CD4-positive, alpha-beta memory T cell (primary cell): ENCODE measurements at regions of chr18 and their contacts with region 1.

Region 1: DNA sequence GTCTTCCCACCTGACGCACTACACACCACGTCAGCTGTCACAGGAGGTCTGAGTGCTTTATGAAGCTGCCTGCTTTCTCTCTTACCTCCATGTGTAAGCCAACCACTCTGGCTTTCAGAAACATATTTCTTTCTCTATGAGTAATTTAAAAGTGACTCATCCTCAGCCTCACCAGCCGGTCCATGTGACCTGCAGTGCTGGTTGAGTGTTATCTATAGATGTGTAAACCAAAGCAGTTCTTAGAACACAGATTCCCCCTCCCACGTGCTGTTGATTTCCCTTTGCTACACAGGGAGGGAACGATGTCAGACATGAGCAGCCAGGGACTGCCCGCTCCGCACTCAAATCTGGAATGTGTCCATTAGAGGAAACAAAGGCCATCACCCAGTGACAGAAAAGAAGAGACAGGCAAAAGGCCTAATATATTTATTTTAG is 157.8 kb downstream of the BCL2 start:
- DNase-seq: peak; percentile 79 to 97 (median 86)
- H3K4me3 ChIP-seq: peak overlapping the region; percentile 37 to 38
- H3K4me3 Mint-ChIP-seq: peak overlapping the region; percentile 68 to 93 (median 90)
- H3K27ac ChIP-seq: peak overlapping the region; percentile 97
- H3K27ac Mint-ChIP-seq: peak overlapping the region; percentile 93 to 100 (median 99)
- H3K4me1 ChIP-seq: peaks cover 90% of the 10 kb centered on the region
- H3K4me1 Mint-ChIP-seq: peaks cover 77 to 96% (median 85%) of the 10 kb centered on the region in 4 donors
- H3K27me3 ChIP-seq: no peaks in the 10 kb centered on the region
- H3K27me3 Mint-ChIP-seq: no peaks in the 10 kb centered on the region

Region 2: GRCh38 chr18:63119647-63120046 is 42.1 kb before region 1 on chr18:
- CTCF ChIA-PET with region 1: no interaction called
- POLR2A ChIA-PET with region 1: no interaction called
- intact Hi-C with region 1: no loop called
- DNase-seq: no peak
- H3K4me3 ChIP-seq: no peak overlapping the region
- H3K4me3 Mint-ChIP-seq: no peak overlapping the region
- H3K27ac ChIP-seq: no peak overlapping the region
- H3K27ac Mint-ChIP-seq: peak overlapping the region in 1 of 7 donors; percentile 82
- H3K4me1 ChIP-seq: no peaks in the 10 kb centered on the region
- H3K4me1 Mint-ChIP-seq: peaks cover 3 to 9% (median 4%) of the 10 kb centered on the region in 4 donors
- H3K27me3 ChIP-seq: no peaks in the 10 kb centered on the region
- H3K27me3 Mint-ChIP-seq: peaks cover 0 to 3% of the 10 kb centered on the region in 2 donors

Region 3: GRCh38 chr18:63175264-63175663 is 13.5 kb after region 1 on chr18:
- CTCF ChIA-PET with region 1: interaction called, 20 read pairs
- POLR2A ChIA-PET with region 1: interaction called, 42 read pairs
- intact Hi-C with region 1: no loop called
- DNase-seq: no peak
- H3K4me3 ChIP-seq: no peak overlapping the region
- H3K4me3 Mint-ChIP-seq: peak overlapping the region in 1 of 8 donors; percentile 12
- H3K27ac ChIP-seq: no peak overlapping the region
- H3K27ac Mint-ChIP-seq: peak overlapping the region; percentile 32 to 66 (median 52)
- H3K4me1 ChIP-seq: peaks cover 33% of the 10 kb centered on the region
- H3K4me1 Mint-ChIP-seq: peaks cover 43 to 68% (median 53%) of the 10 kb centered on the region in 4 donors
- H3K27me3 ChIP-seq: no peaks in the 10 kb centered on the region
- H3K27me3 Mint-ChIP-seq: no peaks in the 10 kb centered on the region

Region 4: GRCh38 chr18:63199743-63200241 is 38.0 kb after region 1 on chr18:
- CTCF ChIA-PET with region 1: interaction called, 17 read pairs
- POLR2A ChIA-PET with region 1: interaction called, 40 read pairs
- intact Hi-C with region 1: loop called (anchors 1 kb)
- DNase-seq: peak; percentile 66 to 76 (median 71)
- H3K4me3 ChIP-seq: peak overlapping the region; percentile 64 to 65
- H3K4me3 Mint-ChIP-seq: no peak overlapping the region
- H3K27ac ChIP-seq: peak overlapping the region; percentile 59
- H3K27ac Mint-ChIP-seq: no peak overlapping the region
- H3K4me1 ChIP-seq: peaks cover 85% of the 10 kb centered on the region
- H3K4me1 Mint-ChIP-seq: peaks cover 28 to 37% (median 31%) of the 10 kb centered on the region in 4 donors
- H3K27me3 ChIP-seq: no peaks in the 10 kb centered on the region
- H3K27me3 Mint-ChIP-seq: no peaks in the 10 kb centered on the region

Region 5: GRCh38 chr18:63216516-63217311 is 54.9 kb after region 1 on chr18:
- CTCF ChIA-PET with region 1: interaction called, 16 read pairs
- POLR2A ChIA-PET with region 1: interaction called, 21 read pairs
- intact Hi-C with region 1: no loop called
- DNase-seq: peak; percentile 38 to 60 (median 50)
- H3K4me3 ChIP-seq: peak overlapping the region in 1 of 2 donors; percentile 21
- H3K4me3 Mint-ChIP-seq: peak overlapping the region; percentile 67 to 84 (median 78)
- H3K27ac ChIP-seq: peak overlapping the region; percentile 55
- H3K27ac Mint-ChIP-seq: peak overlapping the region; percentile 87 to 97 (median 91)
- H3K4me1 ChIP-seq: peaks cover 88% of the 10 kb centered on the region
- H3K4me1 Mint-ChIP-seq: peaks cover 71 to 100% (median 89%) of the 10 kb centered on the region in 4 donors
- H3K27me3 ChIP-seq: no peaks in the 10 kb centered on the region
- H3K27me3 Mint-ChIP-seq: no peaks in the 10 kb centered on the region

Region 6: DNA sequence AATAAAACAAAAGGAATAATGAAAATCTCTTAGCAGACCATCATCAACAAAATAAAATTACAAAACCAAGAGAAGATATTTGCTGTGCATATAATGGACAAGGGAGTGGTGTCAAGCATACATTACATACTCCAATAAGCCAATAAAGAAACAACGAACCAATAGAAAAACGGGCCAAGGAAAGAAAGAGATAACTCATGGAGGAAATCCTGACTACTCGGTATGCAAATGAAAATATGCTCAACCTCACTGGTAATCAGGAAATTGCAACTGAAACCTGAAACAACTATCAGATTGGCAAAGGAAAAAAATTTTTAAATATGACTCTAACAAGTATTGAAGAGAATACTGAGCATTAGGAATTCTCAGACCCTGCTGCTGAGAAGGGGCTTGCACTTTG is 73.1 kb after region 1 on chr18:
- CTCF ChIA-PET with region 1: interaction called, 3 read pairs
- POLR2A ChIA-PET with region 1: interaction called, 21 read pairs
- intact Hi-C with region 1: no loop called
- DNase-seq: no peak
- H3K4me3 ChIP-seq: no peak overlapping the region
- H3K4me3 Mint-ChIP-seq: peak overlapping the region; percentile 16 to 80 (median 59)
- H3K27ac ChIP-seq: peak overlapping the region; percentile 21
- H3K27ac Mint-ChIP-seq: peak overlapping the region; percentile 53 to 92 (median 84)
- H3K4me1 ChIP-seq: peaks cover 49% of the 10 kb centered on the region
- H3K4me1 Mint-ChIP-seq: peaks cover 53 to 83% (median 67%) of the 10 kb centered on the region in 4 donors
- H3K27me3 ChIP-seq: no peaks in the 10 kb centered on the region
- H3K27me3 Mint-ChIP-seq: no peaks in the 10 kb centered on the region

Region 7: GRCh38 chr18:63253428-63254372 is 91.9 kb after region 1 on chr18:
- CTCF ChIA-PET with region 1: no interaction called
- POLR2A ChIA-PET with region 1: no interaction called
- intact Hi-C with region 1: no loop called
- DNase-seq: no peak
- H3K4me3 ChIP-seq: no peak overlapping the region
- H3K4me3 Mint-ChIP-seq: peak overlapping the region in 7 of 8 donors; percentile 3 to 83 (median 66)
- H3K27ac ChIP-seq: peak overlapping the region; percentile 4
- H3K27ac Mint-ChIP-seq: peak overlapping the region; percentile 37 to 83 (median 79)
- H3K4me1 ChIP-seq: peaks cover 77% of the 10 kb centered on the region
- H3K4me1 Mint-ChIP-seq: peaks cover 56 to 87% (median 68%) of the 10 kb centered on the region in 4 donors
- H3K27me3 ChIP-seq: no peaks in the 10 kb centered on the region
- H3K27me3 Mint-ChIP-seq: no peaks in the 10 kb centered on the region

Region 8: DNA sequence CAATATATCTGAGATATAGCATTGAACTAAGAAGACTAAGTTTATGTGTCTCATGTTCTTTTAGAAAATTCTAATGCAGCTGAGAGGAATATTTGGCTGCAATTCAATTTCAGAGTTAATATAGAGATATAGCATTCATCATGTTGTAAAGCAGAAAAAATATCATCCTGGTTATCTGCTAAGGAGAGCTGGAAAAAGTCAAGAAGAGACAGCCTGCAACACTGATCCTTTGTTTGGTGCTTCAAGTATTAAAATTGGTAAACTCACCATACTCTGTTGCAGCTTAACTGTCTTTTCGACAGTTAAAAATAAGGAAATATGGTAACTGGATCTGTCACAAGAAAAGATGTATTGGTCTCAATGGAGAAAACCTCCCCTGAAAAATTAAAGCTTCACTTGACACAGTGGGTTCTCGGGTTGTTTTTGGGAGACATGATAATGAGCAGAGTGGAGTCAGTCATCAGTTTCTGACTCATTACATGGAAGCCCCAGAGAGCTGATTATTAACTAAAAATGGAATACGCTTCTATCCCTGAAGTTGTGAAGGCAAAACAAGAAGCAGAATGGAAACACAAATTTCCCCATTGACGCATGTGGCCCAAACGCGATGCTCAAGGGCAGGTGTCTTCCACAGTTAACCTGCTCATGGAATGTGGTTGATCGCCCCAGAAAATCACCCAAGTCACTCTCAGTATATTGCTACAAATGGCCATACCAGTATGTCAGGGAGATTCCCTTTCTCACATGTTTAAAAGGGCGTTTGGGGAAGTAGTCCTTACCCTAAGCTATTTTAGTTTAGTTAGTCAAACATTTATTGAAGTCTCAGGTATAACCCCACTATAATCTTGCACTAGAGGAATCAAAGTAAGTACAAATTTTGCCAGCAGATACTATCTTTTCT is 149.6 kb after region 1 on chr18:
- CTCF ChIA-PET with region 1: interaction called, 25 read pairs
- POLR2A ChIA-PET with region 1: interaction called, 195 read pairs
- intact Hi-C with region 1: no loop called
- DNase-seq: no peak
- H3K4me3 ChIP-seq: no peak overlapping the region
- H3K4me3 Mint-ChIP-seq: peak overlapping the region in 7 of 8 donors; percentile 26 to 92 (median 69)
- H3K27ac ChIP-seq: peak overlapping the region; percentile 14
- H3K27ac Mint-ChIP-seq: peak overlapping the region; percentile 51 to 94 (median 80)
- H3K4me1 ChIP-seq: peaks cover 96% of the 10 kb centered on the region
- H3K4me1 Mint-ChIP-seq: peaks cover 61 to 96% (median 82%) of the 10 kb centered on the region in 4 donors
- H3K27me3 ChIP-seq: no peaks in the 10 kb centered on the region
- H3K27me3 Mint-ChIP-seq: no peaks in the 10 kb centered on the region